ENCODE measurements at regions of chr18 and their contacts with region 1.

Region 1: GRCh38 chr18:70301667-70302066 is 12.8 kb downstream of the SOCS6 start:
- DNase-seq: no peak
- H3K4me3 ChIP-seq: no peak overlapping the region
- H3K27ac ChIP-seq: no peak overlapping the region
- H3K4me1 ChIP-seq: peaks cover 0 to 41% (median 8%) of the 10 kb centered on the region in 4 donors
- H3K27me3 ChIP-seq: no peaks in the 10 kb centered on the region
- CTCF ChIP-seq: no peak

Region 2: DNA sequence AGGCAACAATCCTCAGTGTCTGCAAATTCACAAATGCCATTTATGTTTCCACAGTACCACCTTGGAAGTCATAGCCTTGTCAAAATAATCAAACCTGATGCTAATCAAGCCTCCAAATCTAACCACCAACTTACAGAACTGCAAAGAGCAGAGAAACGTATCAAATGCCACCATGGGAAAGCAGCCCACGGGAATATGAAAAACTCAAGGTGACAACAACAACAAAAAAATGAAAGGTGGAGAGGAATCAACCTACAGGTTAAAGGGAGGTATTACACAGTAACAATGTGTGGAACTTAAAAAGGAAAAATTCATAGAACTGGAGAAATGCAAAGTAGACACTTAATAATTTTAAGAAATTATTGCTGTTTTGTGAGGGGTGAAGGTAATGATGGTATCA is 400.7 kb before region 1 on chr18:
- intact Hi-C with region 1: no loop called
- DNase-seq: no peak
- H3K4me3 ChIP-seq: no peak overlapping the region
- H3K27ac ChIP-seq: no peak overlapping the region
- H3K4me1 ChIP-seq: no peaks in the 10 kb centered on the region
- H3K27me3 ChIP-seq: no peaks in the 10 kb centered on the region
- CTCF ChIP-seq: no peak

Region 3: GRCh38 chr18:71223486-71223885 is 921.8 kb after region 1 on chr18:
- intact Hi-C with region 1: no loop called
- DNase-seq: no peak
- H3K4me3 ChIP-seq: no peak overlapping the region
- H3K27ac ChIP-seq: no peak overlapping the region
- H3K4me1 ChIP-seq: no peaks in the 10 kb centered on the region
- H3K27me3 ChIP-seq: no peaks in the 10 kb centered on the region
- CTCF ChIP-seq: no peak

Region 4: DNA sequence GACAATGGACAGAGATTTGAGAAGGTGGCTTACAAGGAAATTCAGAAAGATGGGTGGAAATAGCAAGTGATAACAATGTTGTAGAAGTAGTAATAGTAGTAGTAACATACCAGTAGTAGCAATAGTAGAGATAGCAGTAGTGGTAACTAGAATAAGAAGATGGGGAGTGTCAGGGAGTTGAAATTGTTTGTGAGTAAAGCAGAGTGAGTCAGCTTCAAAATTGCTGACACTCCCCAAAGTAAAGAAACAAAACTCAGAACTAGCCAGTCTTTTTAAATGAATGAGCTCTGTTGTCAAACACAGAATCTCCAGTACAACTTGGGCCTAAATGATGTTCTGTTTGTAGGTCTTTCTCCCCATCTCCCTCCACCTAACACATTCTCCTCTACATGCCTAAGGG is 1201.6 kb after region 1 on chr18:
- intact Hi-C with region 1: loop called (anchors 5 kb)
- DNase-seq: no peak
- H3K4me3 ChIP-seq: no peak overlapping the region
- H3K27ac ChIP-seq: no peak overlapping the region
- H3K4me1 ChIP-seq: no peaks in the 10 kb centered on the region
- H3K27me3 ChIP-seq: no peaks in the 10 kb centered on the region
- CTCF ChIP-seq: no peak